Activated CD8-positive, alpha-beta memory T cell treated with anti-CD3 and anti-CD28 coated beads, Interleukin-2, amount 10 ng/mL, durations not matched to agents 7 days and 5 days (primary cell): ENCODE measurements at regions of chr1 and their contacts with region 1.

Region 1: DNA sequence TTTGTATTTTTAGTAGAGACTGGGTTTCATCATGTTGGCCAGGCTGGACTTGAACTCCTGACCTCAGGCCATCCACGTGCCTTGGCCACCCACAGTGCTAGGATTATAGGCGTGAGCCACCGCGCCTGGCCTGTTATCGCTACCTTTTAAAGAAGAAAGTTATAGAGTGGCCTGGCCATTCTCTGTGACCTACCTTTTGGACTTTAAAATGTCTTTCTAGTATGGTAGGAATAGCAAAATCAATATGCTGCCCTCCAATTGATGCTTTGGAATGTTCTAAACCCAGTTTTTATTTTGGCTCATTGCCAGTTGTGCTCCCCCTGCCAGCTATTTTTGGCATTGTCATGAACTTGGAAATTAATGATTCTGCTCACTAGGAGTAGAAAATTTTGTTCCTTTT is 19.9 kb downstream of the HIPK1 start:
- DNase-seq: no peak
- ATAC-seq: no peak
- H3K4me3 Mint-ChIP-seq: no peak overlapping the region
- H3K27ac Mint-ChIP-seq: no peak overlapping the region
- H3K4me1 Mint-ChIP-seq: peaks cover 52% of the 10 kb centered on the region
- H3K27me3 Mint-ChIP-seq: no peaks in the 10 kb centered on the region

Region 2: GRCh38 chr1:113835642-113836307 is 113.2 kb before region 1 on chr1:
- CTCF ChIA-PET with region 1: interaction called, 13 read pairs
- DNase-seq: no peak
- ATAC-seq: no peak
- H3K4me3 Mint-ChIP-seq: no peak overlapping the region
- H3K27ac Mint-ChIP-seq: peak overlapping the region; percentile 12
- H3K4me1 Mint-ChIP-seq: peaks cover 10% of the 10 kb centered on the region
- H3K27me3 Mint-ChIP-seq: no peaks in the 10 kb centered on the region

Region 3: GRCh38 chr1:113898241-113898814 is 50.7 kb before region 1 on chr1:
- CTCF ChIA-PET with region 1: no interaction called
- DNase-seq: no peak
- ATAC-seq: no peak
- H3K4me3 Mint-ChIP-seq: no peak overlapping the region
- H3K27ac Mint-ChIP-seq: peak overlapping the region; percentile 21
- H3K4me1 Mint-ChIP-seq: peaks cover 53% of the 10 kb centered on the region
- H3K27me3 Mint-ChIP-seq: no peaks in the 10 kb centered on the region